ENCODE measurements at regions of chrX and their contacts with region 1.

Region 1: DNA sequence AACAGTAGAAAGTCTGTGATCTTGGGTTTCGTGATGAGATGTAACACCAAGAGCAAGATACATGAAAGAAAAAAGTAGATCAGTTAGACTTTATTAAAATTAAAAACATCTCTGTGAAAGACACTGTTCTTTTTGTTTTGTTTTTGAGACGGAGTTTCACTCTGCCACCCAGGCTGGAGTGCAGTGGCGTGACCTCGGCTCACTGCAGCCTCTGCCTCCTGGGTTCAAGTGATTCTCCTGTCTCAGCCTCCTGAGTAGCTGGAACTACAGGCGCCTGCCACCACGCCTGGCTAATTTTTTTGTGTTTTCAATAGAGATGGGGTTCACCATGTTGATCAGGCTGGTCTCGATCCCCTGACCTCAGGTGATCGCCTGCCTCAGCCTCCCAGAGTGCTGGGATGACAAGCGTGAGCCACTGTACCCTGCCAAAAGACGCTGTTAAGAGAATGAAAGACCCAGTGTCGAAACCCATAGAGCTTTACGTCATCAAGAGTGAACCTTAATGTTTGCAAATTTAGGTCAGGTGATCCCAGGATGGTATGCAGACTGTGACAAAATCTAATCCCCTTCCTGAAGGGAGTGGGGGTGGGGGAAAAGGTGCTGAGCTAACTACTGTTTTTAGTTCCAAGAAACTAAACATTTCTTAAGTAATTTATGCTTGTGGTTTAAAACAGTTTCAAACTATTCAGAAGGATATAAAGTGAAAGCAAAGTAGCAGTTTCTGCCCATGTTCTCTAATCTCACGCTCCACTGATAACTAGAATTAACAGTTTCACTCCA is 8.0 kb downstream of the OFD1 start:
- DNase-seq: peak; percentile 75
- H3K4me3 Mint-ChIP-seq: peak overlapping the region; percentile 58
- H3K27ac Mint-ChIP-seq: peak overlapping the region; percentile 85
- H3K4me1 Mint-ChIP-seq: peaks cover 31% of the 10 kb centered on the region
- H3K27me3 Mint-ChIP-seq: no peaks in the 10 kb centered on the region

Region 2: DNA sequence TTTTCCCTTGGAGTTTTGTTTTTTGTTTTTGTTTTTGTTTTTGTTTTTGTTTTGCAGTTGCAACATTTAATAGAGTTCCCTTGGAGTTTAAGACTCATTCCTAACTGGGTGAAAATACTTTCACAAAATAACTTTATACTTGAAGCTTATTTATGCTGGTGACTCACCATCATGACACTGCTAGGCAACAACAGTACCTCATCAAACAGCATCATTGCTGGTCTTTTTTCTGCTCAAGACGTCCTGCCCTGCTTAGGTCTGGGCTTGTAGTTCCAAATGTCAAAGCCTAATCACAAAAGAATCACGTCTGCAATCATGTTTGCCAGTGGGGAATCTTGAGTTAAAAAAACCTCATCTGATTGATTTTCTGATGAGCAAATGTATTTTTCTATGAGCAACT is 1057.0 kb before region 1 on chrX:
- CTCF ChIA-PET with region 1: no interaction called
- intact Hi-C with region 1: no loop called
- DNase-seq: no peak
- H3K4me3 Mint-ChIP-seq: no peak overlapping the region
- H3K27ac Mint-ChIP-seq: no peak overlapping the region
- H3K4me1 Mint-ChIP-seq: no peaks in the 10 kb centered on the region
- H3K27me3 Mint-ChIP-seq: no peaks in the 10 kb centered on the region

Region 3: GRCh38 chrX:13376857-13377549 is 365.6 kb before region 1 on chrX:
- CTCF ChIA-PET with region 1: no interaction called
- intact Hi-C with region 1: loop called (anchors 5 kb)
- DNase-seq: peak; percentile 24
- H3K4me3 Mint-ChIP-seq: no peak overlapping the region
- H3K27ac Mint-ChIP-seq: no peak overlapping the region
- H3K4me1 Mint-ChIP-seq: peaks cover 25% of the 10 kb centered on the region
- H3K27me3 Mint-ChIP-seq: no peaks in the 10 kb centered on the region

Region 4: DNA sequence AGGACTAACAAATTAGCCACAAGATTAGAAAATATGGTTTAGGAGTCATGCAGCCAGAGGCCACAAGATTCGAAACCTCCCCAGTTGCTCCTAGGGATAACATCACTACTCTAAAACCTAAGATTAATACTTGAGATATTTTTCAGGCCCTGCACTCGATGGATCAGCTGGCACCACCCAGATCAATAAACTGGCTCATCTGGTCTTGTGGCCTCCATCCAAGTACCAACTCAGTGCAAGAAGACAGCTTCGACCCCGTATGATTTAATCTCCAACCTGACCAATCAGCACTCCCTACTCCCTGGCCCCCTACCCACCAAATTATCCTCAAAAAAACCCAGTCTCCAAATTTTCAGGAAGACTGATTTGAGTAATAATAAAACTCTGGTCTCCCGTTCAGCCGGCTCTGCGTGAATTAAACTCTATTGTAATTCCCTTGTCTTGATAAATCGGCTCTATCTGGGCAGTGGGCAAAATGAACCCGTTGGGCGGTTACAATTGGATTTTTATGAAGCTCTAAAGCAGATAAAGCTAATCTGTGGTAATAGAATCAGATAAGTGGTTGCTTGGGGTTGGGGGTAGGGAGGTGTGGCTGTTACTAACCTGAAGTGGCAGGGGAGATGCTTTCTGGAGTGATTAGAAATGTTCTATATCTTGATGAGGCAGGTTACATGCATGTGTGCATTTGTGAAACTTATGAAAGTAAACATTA is 330.9 kb before region 1 on chrX:
- CTCF ChIA-PET with region 1: no interaction called
- intact Hi-C with region 1: no loop called
- DNase-seq: no peak
- H3K4me3 Mint-ChIP-seq: no peak overlapping the region
- H3K27ac Mint-ChIP-seq: no peak overlapping the region
- H3K4me1 Mint-ChIP-seq: no peaks in the 10 kb centered on the region
- H3K27me3 Mint-ChIP-seq: no peaks in the 10 kb centered on the region

Region 5: GRCh38 chrX:13545726-13546125 is 196.9 kb before region 1 on chrX:
- CTCF ChIA-PET with region 1: no interaction called
- intact Hi-C with region 1: loop called (anchors 1 kb)
- DNase-seq: no peak
- H3K4me3 Mint-ChIP-seq: no peak overlapping the region
- H3K27ac Mint-ChIP-seq: no peak overlapping the region
- H3K4me1 Mint-ChIP-seq: peaks cover 13% of the 10 kb centered on the region
- H3K27me3 Mint-ChIP-seq: peaks cover 2% of the 10 kb centered on the region

Region 6: DNA sequence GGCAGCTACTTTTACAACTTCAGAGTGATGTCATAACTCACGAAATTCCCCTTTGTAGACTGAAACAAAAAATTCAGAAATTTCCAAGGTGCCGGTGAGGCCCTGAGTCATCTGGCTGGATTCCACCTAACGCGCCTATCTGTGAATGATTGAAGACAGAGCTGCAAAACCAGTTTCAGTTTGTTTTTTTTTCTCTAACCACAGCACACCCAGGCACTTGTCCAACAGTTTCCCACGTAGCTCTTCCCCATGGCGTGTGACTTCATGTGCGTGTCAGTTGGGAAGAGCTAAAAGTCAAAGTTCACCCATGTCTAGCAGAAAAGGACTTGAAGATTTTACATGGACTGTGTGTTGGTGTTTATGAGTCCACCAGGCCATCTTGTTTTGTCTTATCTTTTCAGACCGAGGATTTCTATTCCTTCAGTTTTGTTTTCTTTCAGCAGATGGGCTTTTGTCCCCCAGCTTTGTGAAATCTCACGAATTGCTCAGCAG is 73.3 kb before region 1 on chrX:
- CTCF ChIA-PET with region 1: no interaction called
- intact Hi-C with region 1: loop called (anchors 1 kb)
- DNase-seq: peak; percentile 82
- H3K4me3 Mint-ChIP-seq: peak overlapping the region; percentile 69
- H3K27ac Mint-ChIP-seq: peak overlapping the region; percentile 92
- H3K4me1 Mint-ChIP-seq: peaks cover 14% of the 10 kb centered on the region
- H3K27me3 Mint-ChIP-seq: no peaks in the 10 kb centered on the region

Region 7: DNA sequence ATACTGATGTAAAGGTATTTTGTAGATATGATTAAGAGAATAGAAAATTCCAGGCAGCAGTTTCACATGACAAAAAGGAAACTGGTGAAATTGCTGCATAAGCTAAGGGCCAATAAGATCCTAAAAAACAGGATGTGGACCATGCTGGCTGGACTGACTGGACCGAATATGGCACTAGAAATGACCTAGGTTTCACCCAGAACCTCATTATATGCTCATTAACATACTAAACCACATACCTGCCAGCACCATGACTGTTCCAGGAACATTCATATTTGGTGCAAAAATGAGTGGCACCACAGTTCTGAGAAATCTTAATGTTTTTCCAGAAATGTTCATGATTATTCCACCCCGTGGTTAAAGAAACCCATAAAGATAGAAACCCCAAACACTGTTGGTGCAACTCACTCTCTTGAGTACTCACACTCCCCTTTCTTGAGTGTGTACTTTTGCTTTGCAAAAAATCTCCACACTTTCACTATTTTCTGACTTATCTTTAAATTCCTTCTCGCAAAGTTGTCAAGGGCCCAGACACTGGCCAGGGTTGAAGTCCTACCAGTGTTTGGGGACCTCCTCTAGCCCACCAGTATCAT is 1056.3 kb after region 1 on chrX:
- CTCF ChIA-PET with region 1: no interaction called
- intact Hi-C with region 1: loop called (anchors 5 kb)
- DNase-seq: peak; percentile 7
- H3K4me3 Mint-ChIP-seq: no peak overlapping the region
- H3K27ac Mint-ChIP-seq: peak overlapping the region; percentile 76
- H3K4me1 Mint-ChIP-seq: peaks cover 13% of the 10 kb centered on the region
- H3K27me3 Mint-ChIP-seq: no peaks in the 10 kb centered on the region

Measured in activated naive CD4-positive, alpha-beta T cell treated with anti-CD3 and anti-CD28 coated beads for 36 hours (primary cell).